ENCODE measurements at regions of chr16 and their contacts with region 1.

Region 1: DNA sequence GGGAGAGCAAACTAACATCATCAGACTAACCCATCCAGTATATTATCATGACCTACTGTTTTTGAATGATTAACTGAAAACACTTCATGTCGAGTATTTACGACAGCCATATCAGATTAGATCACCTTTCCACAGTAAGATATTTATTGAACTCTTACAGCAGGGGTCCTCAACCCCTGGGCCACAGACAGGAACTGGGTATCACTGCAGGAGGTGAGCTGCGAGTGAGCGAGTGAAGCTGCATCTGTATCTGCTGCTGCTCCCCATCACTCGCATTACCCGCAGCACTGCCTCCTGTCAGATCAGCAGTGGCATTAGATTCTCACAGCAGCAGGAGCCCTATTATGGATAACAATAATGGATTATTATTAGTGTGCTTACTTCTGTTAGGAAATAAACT is 59.5 kb downstream of the NETO2 start:
- DNase-seq: no peak
- H3K4me3 ChIP-seq: no peak overlapping the region
- H3K27ac ChIP-seq: no peak overlapping the region
- H3K27me3 ChIP-seq: no peaks in the 10 kb centered on the region
- CTCF ChIP-seq: no peak

Region 2: GRCh38 chr16:46830902-46831647 is 253.1 kb before region 1 on chr16 and contains the start of gene C16orf87:
- CTCF ChIA-PET with region 1: interaction called, 12 read pairs
- POLR2A ChIA-PET with region 1: no interaction called
- DNase-seq: peak; percentile 84
- H3K4me3 ChIP-seq: peak within 1 kb of the TSS; percentile 79
- H3K27ac ChIP-seq: peak within 1 kb of the TSS; percentile 40
- H3K27me3 ChIP-seq: no peaks in the 10 kb centered on the region
- CTCF ChIP-seq: no peak
- polyA plus RNA-seq, gene C16orf87: 16.8 and 21.7 TPM in 2 replicates